ENCODE measurements at regions of chr11 and their contacts with region 1.

Region 1: GRCh38 chr11:65888163-65888814 is at the start of gene FIBP:
- DNase-seq: peak in 1 of 2 donors; percentile 98
- H3K4me3 ChIP-seq: peak within 1 kb of the TSS; percentile 69 to 86
- H3K27ac ChIP-seq: peak within 1 kb of the TSS; percentile 97
- H3K4me1 ChIP-seq: peaks cover 70% of the 10 kb centered on the region
- H3K27me3 ChIP-seq: no peaks in the 10 kb centered on the region
- CTCF ChIP-seq: peak; percentile 72 to 95 (median 80)
- POLR2A ChIP-seq: peak in 1 of 2 donors; percentile 87
- total RNA-seq, gene FIBP: 78.6 TPM

Region 2: GRCh38 chr11:65919146-65920033 is 31.1 kb after region 1 on chr11 and contains the start of gene DRAP1:
- intact Hi-C with region 1: loop called (anchors 2 kb)
- DNase-seq: peak in 1 of 2 donors; percentile 98
- H3K4me3 ChIP-seq: peak within 1 kb of the TSS; percentile 92
- H3K27ac ChIP-seq: peak within 1 kb of the TSS; percentile 93
- H3K4me1 ChIP-seq: peaks cover 58% of the 10 kb centered on the region
- H3K27me3 ChIP-seq: no peaks in the 10 kb centered on the region
- CTCF ChIP-seq: peak in 1 of 3 experiments; percentile 31
- POLR2A ChIP-seq: peak in 1 of 2 donors; percentile 89
- total RNA-seq, gene DRAP1: 59.2 TPM

Region 3: DNA sequence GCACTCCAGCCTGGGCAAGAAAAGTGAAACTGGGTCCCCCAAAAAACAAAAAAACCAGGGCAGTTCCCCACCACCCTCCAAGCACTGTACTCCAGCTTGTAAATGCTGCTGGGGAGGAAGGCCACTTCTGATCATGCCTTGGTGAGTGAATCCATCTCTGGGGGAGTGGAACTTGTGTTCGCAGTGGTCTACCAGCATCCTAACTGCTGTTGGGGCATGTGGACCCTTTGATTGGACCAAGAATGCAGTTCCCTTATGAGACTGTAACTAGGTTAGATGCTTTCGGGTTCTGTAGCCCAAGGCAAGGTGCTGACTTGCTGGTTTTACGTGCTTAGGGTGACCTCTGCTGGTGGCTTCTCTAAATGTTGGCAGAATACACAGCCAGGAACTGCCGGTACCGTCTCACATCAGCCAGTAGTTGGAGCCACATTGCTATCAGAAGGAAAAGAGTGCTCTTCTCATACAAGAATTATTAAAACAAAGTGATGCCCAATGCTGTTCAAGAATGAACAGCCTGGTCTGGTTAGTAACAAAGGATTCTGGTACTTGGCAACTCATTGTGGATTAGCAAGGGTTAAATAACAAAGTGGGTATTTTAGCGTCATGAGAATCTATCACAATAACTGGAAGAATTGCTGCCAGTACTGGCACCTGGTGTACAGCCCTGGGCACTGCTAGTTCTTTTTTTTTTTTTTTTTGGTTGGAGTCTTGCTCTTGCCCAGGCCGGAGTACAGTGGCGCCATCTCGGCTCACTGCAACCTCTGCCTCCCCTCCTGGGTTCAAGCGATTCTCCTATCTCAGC is 100.7 kb after region 1 on chr11:
- intact Hi-C with region 1: loop called (anchors 5 kb)
- DNase-seq: peak in 1 of 2 donors; percentile 94
- H3K4me3 ChIP-seq: no peak overlapping the region
- H3K27ac ChIP-seq: no peak overlapping the region
- H3K4me1 ChIP-seq: no peaks in the 10 kb centered on the region
- H3K27me3 ChIP-seq: no peaks in the 10 kb centered on the region
- CTCF ChIP-seq: peak; percentile 87 to 99 (median 98)
- POLR2A ChIP-seq: no peak

Region 4: GRCh38 chr11:66001942-66002647 is 113.8 kb after region 1 on chr11 and contains the starts of genes BANF1 and EIF1AD:
- intact Hi-C with region 1: loop called (anchors 5 kb)
- DNase-seq: peak; percentile 96 to 98
- H3K4me3 ChIP-seq: peak within 1 kb of the TSS; percentile 61 to 96
- H3K27ac ChIP-seq: peak within 1 kb of the TSS; percentile 97
- H3K4me1 ChIP-seq: peaks cover 36% of the 10 kb centered on the region
- H3K27me3 ChIP-seq: no peaks in the 10 kb centered on the region
- CTCF ChIP-seq: no peak
- POLR2A ChIP-seq: peak in 1 of 2 donors; percentile 39
- total RNA-seq, gene BANF1: 54.5 TPM
- total RNA-seq, gene EIF1AD: 50.6 TPM